ENCODE measurements at regions of chr5 and their contacts with region 1.

Region 1: GRCh38 chr5:141951332-141951781 is 6.6 kb downstream of the PCDH12 start:
- DNase-seq: no peak
- ATAC-seq: peak in 2 of 4 donors; percentile 26 to 33
- H3K4me3 ChIP-seq: peak overlapping the region; percentile 32
- H3K27ac ChIP-seq: no peak overlapping the region
- H3K4me1 ChIP-seq: no peaks in the 10 kb centered on the region
- H3K27me3 ChIP-seq: peaks cover 0 to 4% (median 3%) of the 10 kb centered on the region in 3 donors
- CTCF ChIP-seq: peak; percentile 17

Region 2: GRCh38 chr5:141883892-141884318 is 67.5 kb before region 1 on chr5:
- intact Hi-C with region 1: loop called (anchors 2 to 5 kb)
- DNase-seq: no peak
- ATAC-seq: no peak
- H3K4me3 ChIP-seq: no peak overlapping the region
- H3K27ac ChIP-seq: no peak overlapping the region
- H3K4me1 ChIP-seq: peaks cover 10% of the 10 kb centered on the region
- H3K27me3 ChIP-seq: peaks cover 0 to 46% (median 11%) of the 10 kb centered on the region in 3 donors
- CTCF ChIP-seq: no peak

Region 3: GRCh38 chr5:142053426-142054151 is 102.2 kb after region 1 on chr5:
- intact Hi-C with region 1: no loop called
- DNase-seq: no peak
- ATAC-seq: peak in 3 of 4 donors; percentile 64 to 78 (median 67)
- H3K4me3 ChIP-seq: no peak overlapping the region
- H3K27ac ChIP-seq: no peak overlapping the region
- H3K4me1 ChIP-seq: peaks cover 4% of the 10 kb centered on the region
- H3K27me3 ChIP-seq: no peaks in the 10 kb centered on the region
- CTCF ChIP-seq: no peak

Region 4: GRCh38 chr5:142079306-142079721 is 128.0 kb after region 1 on chr5:
- intact Hi-C with region 1: no loop called
- DNase-seq: no peak
- ATAC-seq: no peak
- H3K4me3 ChIP-seq: no peak overlapping the region
- H3K27ac ChIP-seq: no peak overlapping the region
- H3K4me1 ChIP-seq: no peaks in the 10 kb centered on the region
- H3K27me3 ChIP-seq: no peaks in the 10 kb centered on the region
- CTCF ChIP-seq: no peak

Region 5: DNA sequence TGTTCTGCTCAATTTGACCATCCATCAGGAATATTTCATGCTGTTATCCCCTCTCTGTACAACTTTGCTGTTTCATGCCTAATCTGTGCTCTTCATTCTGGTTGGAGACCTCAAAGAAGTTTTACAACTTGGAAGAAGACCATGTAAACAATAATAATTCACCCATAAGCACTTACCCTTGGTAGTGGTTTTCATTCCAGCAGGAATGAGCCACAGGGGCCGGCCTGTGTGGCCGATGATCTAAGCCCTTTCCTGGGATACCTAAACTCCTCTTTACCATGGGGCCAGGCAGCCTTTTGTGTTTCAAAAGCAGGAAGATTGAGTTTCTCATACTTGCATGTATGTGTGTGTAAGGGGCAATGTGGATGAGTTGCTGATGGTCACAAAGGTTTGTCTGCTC is 569.5 kb after region 1 on chr5:
- intact Hi-C with region 1: no loop called
- DNase-seq: no peak
- ATAC-seq: no peak
- H3K4me3 ChIP-seq: no peak overlapping the region
- H3K27ac ChIP-seq: no peak overlapping the region
- H3K4me1 ChIP-seq: no peaks in the 10 kb centered on the region
- H3K27me3 ChIP-seq: no peaks in the 10 kb centered on the region
- CTCF ChIP-seq: no peak

Measured in psoas muscle (tissue), 8 donors.